CD8-positive, alpha-beta T cell (primary cell): ENCODE measurements at regions of chr20 and their contacts with region 1.

Region 1: DNA sequence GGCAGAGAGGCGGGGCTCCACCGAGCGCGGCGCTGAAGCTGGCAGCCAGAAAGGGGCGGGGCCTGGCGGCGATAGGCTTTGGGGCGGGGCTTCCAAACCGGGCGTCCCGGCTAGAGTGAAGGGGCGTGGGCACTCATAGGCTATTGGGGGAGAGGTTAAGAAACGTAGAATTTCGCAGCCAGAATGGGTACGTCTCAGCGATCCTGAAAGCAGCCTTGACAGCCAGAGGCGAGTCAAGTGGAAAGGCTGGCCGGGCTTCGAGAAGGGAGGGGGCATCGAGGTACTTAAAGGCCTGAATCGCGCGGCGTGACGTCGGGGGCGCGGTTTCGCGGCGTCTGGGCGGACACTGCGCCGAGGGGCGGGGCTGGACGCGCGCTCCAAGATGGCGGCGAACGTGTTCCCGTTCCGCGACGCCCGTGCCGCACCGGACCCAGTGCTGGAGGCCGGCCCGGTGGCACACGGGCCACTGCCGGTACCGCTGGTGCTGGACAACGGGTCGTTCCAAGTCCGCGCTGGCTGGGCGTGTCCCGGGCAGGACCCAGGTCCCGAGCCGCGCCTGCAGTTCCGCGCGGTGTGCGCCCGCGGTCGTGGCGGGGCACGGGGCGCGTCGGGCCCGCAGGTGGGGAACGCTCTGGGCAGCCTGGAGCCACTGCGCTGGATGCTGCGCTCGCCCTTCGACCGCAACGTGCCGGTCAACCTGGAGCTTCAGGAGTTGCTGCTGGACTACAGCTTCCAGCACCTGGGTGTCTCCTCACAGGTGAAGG is at the start of gene ACTR5:
- DNase-seq: peak; percentile 95 to 99 (median 97)
- ATAC-seq: peak; percentile 91
- H3K4me3 ChIP-seq: peak within 1 kb of the TSS; percentile 75 to 86
- H3K4me3 Mint-ChIP-seq: peak within 1 kb of the TSS; percentile 98
- H3K27ac ChIP-seq: peak within 1 kb of the TSS; percentile 81 to 98
- H3K27ac Mint-ChIP-seq: peak within 1 kb of the TSS; percentile 99
- H3K4me1 ChIP-seq: peaks cover 16% of the 10 kb centered on the region
- H3K4me1 Mint-ChIP-seq: peaks cover 23% of the 10 kb centered on the region
- H3K27me3 ChIP-seq: no peaks in the 10 kb centered on the region
- H3K27me3 Mint-ChIP-seq: peaks cover 6% of the 10 kb centered on the region
- CTCF ChIP-seq: no peak
- total RNA-seq, gene ACTR5: 15.7 to 18.2 TPM

Region 2: DNA sequence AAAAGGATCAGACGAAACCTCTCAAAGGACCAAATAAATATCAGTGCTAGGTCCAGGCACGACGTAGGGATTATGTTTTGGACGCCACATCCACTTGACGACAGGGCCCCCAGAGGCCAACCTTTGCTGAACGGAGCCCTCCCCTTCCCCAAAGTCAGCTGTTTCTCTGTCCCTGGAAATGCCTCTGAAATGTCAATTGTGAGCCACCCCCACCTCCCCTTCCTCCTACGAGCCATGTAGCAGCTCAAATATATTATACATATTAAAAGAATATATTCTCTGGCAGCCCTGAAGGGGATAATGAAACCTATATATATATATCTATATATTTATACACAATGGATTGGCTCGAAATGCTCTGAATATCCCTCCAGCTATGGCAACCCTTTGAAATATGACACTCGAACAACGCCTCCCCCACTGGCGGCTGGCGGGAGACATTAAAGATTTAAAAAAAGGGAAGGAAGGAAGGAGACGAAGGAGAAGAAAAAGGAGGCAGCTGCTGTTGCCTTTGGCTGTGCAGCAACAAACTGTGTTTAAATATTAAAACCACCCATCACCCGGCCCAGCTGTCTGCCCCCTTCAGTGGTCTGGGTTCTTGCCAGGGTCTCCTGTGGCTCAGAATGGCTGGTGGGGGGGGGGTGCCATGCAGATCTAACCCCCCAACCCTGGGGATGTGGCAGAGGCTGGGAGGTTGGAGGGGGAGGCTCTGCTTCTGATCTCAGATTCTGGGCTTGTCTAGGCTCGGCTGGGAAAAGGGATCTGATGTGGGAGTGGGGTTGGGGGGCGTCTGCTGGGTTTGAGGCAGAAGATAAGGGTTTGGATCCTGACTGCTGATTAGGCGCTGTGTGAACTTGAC is 1180.7 kb before region 1 on chr20:
- CTCF ChIA-PET with region 1: no interaction called
- POLR2A ChIA-PET with region 1: no interaction called
- intact Hi-C with region 1: no loop called
- DNase-seq: no peak
- ATAC-seq: no peak
- H3K4me3 ChIP-seq: no peak overlapping the region
- H3K4me3 Mint-ChIP-seq: no peak overlapping the region
- H3K27ac ChIP-seq: no peak overlapping the region
- H3K27ac Mint-ChIP-seq: no peak overlapping the region
- H3K4me1 ChIP-seq: no peaks in the 10 kb centered on the region
- H3K4me1 Mint-ChIP-seq: peaks cover 4% of the 10 kb centered on the region
- H3K27me3 ChIP-seq: peaks cover 11 to 14% of the 10 kb centered on the region in 2 experiments
- H3K27me3 Mint-ChIP-seq: peaks cover 39% of the 10 kb centered on the region
- CTCF ChIP-seq: no peak

Region 3: DNA sequence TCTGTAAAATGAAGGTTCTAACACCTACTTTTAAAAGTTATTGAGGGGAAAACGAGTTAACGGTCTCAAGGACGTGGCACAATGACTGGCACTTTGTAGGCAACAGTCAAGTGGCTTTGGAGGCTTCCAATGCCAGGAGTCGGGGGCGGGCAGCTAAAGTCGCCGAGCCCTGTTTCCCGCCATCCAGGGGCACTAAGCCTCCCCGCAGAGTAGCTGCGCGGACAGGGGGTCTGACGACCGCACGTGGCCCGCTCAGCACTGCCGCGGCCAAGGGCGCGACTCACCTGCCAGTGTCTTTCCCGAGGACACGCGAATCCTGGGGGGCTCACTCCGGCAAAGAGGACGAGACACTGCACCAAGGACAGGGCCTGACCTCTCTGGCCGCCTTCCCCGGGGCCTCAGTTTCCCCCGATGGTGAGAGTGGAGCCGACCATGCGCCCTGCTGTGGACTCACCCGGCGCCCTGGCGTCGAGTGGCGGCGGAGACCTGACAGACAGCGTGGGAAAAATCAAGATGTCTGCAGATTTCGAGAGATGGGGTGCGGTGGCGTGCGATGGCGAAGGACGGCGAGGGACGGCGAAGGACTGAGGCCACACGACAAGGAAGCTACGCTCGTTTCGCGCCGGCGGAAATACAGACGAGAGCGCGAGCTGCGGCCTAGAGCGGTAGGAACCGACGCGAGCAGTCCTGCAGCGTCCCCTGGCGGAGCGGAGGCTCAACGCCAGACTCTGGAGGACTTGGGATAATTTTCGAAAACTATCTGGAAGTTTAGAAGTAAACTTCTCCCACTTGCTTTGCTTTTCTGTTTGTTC is 313.3 kb before region 1 on chr20 and contains the start of gene SNHG17:
- CTCF ChIA-PET with region 1: no interaction called
- POLR2A ChIA-PET with region 1: no interaction called
- intact Hi-C with region 1: loop called in 1 of 2 experiments (anchors 10 kb)
- DNase-seq: peak; percentile 73 to 97 (median 88)
- ATAC-seq: peak; percentile 87
- H3K4me3 ChIP-seq: peak within 1 kb of the TSS; percentile 76 to 93
- H3K4me3 Mint-ChIP-seq: peak within 1 kb of the TSS; percentile 93
- H3K27ac ChIP-seq: peak within 1 kb of the TSS; percentile 81 to 88
- H3K27ac Mint-ChIP-seq: peak within 1 kb of the TSS; percentile 96
- H3K4me1 ChIP-seq: peaks cover 22% of the 10 kb centered on the region
- H3K4me1 Mint-ChIP-seq: peaks cover 40% of the 10 kb centered on the region
- H3K27me3 ChIP-seq: no peaks in the 10 kb centered on the region
- H3K27me3 Mint-ChIP-seq: peaks cover 10% of the 10 kb centered on the region
- CTCF ChIP-seq: peak; percentile 100
- total RNA-seq, gene SNHG17: 119 to 128 TPM

Region 4: DNA sequence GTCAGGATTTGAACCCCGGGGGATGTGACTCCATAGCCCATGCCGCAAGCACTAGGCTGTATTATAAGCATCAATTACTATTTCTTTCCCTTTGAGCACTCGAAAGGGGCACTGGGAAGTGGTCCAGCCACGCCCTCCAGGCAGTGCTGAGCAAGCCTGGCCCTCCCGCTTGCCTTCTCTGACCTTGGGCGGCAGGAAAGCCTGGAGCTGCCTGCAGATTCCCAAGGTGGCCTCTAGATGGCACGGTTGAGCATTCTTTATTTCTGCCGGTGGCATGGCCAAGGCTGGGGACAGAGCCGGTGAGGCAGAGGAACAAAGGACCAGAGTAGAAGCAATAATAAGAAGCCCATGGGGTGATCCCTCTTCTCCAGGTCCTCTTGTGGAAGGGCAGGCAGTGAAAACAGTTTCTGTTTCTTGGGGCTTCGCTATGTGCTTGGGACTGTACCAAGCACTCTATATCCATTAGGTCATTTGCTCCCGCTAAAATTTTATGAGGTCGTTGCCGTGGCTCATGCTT is 114.6 kb before region 1 on chr20:
- CTCF ChIA-PET with region 1: interaction called, 14 read pairs
- POLR2A ChIA-PET with region 1: no interaction called
- intact Hi-C with region 1: loop called in 1 of 2 experiments (anchors 1 kb)
- DNase-seq: peak; percentile 28 to 71 (median 56)
- ATAC-seq: peak; percentile 89
- H3K4me3 ChIP-seq: no peak overlapping the region
- H3K4me3 Mint-ChIP-seq: no peak overlapping the region
- H3K27ac ChIP-seq: no peak overlapping the region
- H3K27ac Mint-ChIP-seq: no peak overlapping the region
- H3K4me1 ChIP-seq: no peaks in the 10 kb centered on the region
- H3K4me1 Mint-ChIP-seq: peaks cover 4% of the 10 kb centered on the region
- H3K27me3 ChIP-seq: peaks cover 0 to 4% of the 10 kb centered on the region in 2 experiments
- H3K27me3 Mint-ChIP-seq: peaks cover 15% of the 10 kb centered on the region
- CTCF ChIP-seq: peak; percentile 95

Region 5: DNA sequence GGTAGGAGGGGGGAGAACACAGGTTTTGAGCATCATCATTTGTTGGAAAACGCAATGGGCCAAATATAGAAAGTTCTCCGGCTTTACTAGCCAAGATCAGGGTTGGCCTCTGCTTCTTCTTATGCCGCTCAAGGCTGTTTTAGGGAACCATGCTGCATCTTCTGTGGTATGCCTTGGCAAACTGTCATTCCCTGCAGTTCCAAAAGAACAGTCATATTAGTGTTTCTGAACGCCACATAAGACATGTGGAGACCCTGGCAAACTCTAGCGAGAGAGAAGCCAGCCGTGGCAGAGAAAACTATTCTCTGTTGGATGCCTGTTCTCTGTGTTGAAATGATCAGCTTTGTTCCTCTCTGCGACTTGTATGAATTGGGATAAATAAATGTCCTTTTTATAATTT is 10.8 kb after region 1 on chr20:
- CTCF ChIA-PET with region 1: interaction called, 19 read pairs
- POLR2A ChIA-PET with region 1: interaction called, 4 read pairs
- intact Hi-C with region 1: no loop called
- DNase-seq: no peak
- ATAC-seq: no peak
- H3K4me3 ChIP-seq: no peak overlapping the region
- H3K4me3 Mint-ChIP-seq: no peak overlapping the region
- H3K27ac ChIP-seq: no peak overlapping the region
- H3K27ac Mint-ChIP-seq: no peak overlapping the region
- H3K4me1 ChIP-seq: no peaks in the 10 kb centered on the region
- H3K4me1 Mint-ChIP-seq: no peaks in the 10 kb centered on the region
- H3K27me3 ChIP-seq: no peaks in the 10 kb centered on the region
- H3K27me3 Mint-ChIP-seq: no peaks in the 10 kb centered on the region
- CTCF ChIP-seq: no peak

Region 6: GRCh38 chr20:38893565-38894090 is 145.3 kb after region 1 on chr20:
- CTCF ChIA-PET with region 1: interaction called, 19 read pairs
- POLR2A ChIA-PET with region 1: no interaction called
- intact Hi-C with region 1: loop called (anchors 2 kb)
- DNase-seq: peak; percentile 72 to 91 (median 81)
- ATAC-seq: peak; percentile 80
- H3K4me3 ChIP-seq: peak overlapping the region in 1 of 2 experiments; percentile 22
- H3K4me3 Mint-ChIP-seq: peak overlapping the region; percentile 69
- H3K27ac ChIP-seq: peak overlapping the region; percentile 29 to 82
- H3K27ac Mint-ChIP-seq: peak overlapping the region; percentile 91
- H3K4me1 ChIP-seq: peaks cover 10% of the 10 kb centered on the region
- H3K4me1 Mint-ChIP-seq: peaks cover 31% of the 10 kb centered on the region
- H3K27me3 ChIP-seq: no peaks in the 10 kb centered on the region
- H3K27me3 Mint-ChIP-seq: no peaks in the 10 kb centered on the region
- CTCF ChIP-seq: peak; percentile 85

Region 7: GRCh38 chr20:39049684-39050554 is 301.6 kb after region 1 on chr20:
- CTCF ChIA-PET with region 1: interaction called, 3 read pairs
- POLR2A ChIA-PET with region 1: no interaction called
- intact Hi-C with region 1: loop called in 1 of 2 experiments (anchors 5 kb)
- DNase-seq: peak; percentile 59 to 90 (median 78)
- ATAC-seq: peak; percentile 91
- H3K4me3 ChIP-seq: peak overlapping the region; percentile 55 to 76
- H3K4me3 Mint-ChIP-seq: peak overlapping the region; percentile 85
- H3K27ac ChIP-seq: peak overlapping the region in 1 of 2 experiments; percentile 22
- H3K27ac Mint-ChIP-seq: peak overlapping the region; percentile 56
- H3K4me1 ChIP-seq: peaks cover 9% of the 10 kb centered on the region
- H3K4me1 Mint-ChIP-seq: peaks cover 9% of the 10 kb centered on the region
- H3K27me3 ChIP-seq: no peaks in the 10 kb centered on the region
- H3K27me3 Mint-ChIP-seq: peaks cover 8% of the 10 kb centered on the region
- CTCF ChIP-seq: peak; percentile 98